PC-9 (cell line): ENCODE measurements at regions of chr2 and their contacts with region 1.

Region 1: DNA sequence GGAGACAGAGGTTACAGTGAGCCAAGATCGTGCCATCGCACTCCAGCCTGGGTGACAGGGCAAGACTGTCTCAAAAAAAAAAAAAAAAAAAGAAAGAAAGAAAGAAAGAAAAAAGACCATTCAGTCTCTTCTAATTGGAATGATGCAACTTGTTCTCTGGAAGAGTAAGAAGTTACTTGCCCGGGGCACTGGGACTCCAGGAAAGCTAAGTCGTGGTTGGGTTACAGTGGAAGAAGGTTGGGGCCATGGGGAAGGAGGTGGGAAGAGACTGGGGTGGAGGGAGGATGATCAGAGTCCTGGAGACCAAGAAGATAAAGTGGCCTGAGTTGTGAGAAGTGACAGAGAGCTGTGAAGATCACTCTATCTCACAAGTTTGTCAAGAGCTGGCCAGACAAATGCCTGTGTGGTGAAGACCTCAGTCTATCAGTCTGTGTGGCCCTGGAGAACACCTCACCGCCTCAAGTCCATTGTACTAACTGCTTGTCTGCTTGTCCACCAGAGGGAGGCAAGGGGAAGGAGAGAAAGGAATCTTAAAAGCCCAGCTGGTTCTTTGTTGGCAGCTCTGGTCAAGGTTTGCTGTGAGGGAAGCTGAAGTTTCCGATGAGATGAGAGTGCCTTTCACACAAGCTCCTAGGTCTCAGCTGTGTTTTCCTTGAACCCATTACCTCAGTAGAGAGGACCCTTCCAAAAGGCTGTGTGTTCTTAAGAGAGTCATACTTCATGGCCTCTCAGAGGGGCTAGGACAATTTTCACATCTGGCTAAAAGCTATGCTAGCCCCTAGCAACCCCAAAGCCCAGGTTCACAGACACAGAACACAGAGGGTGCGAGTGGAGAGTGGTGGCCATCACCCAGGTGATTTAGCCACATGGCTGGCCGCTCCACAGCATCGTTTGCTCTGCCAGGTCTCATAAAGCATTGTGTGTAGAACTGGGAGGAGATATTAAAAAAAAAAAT is 72.0 kb upstream of the TMEM178A start:
- DNase-seq: peak in 1 of 2 experiments; percentile 16
- H3K4me3 ChIP-seq: no peak overlapping the region
- H3K27ac ChIP-seq: no peak overlapping the region
- H3K4me1 ChIP-seq: no peaks in the 10 kb centered on the region
- H3K27me3 ChIP-seq: no peaks in the 10 kb centered on the region
- CTCF ChIP-seq: peak; percentile 63

Region 2: GRCh38 chr2:39275016-39275415 is 318.7 kb before region 1 on chr2:
- CTCF ChIA-PET with region 1: no interaction called
- POLR2A ChIA-PET with region 1: no interaction called
- intact Hi-C with region 1: no loop called
- DNase-seq: peak; percentile 6 to 38
- H3K4me3 ChIP-seq: no peak overlapping the region
- H3K27ac ChIP-seq: no peak overlapping the region
- H3K4me1 ChIP-seq: no peaks in the 10 kb centered on the region
- H3K27me3 ChIP-seq: no peaks in the 10 kb centered on the region
- CTCF ChIP-seq: no peak

Region 3: GRCh38 chr2:39696838-39697237 is 103.1 kb after region 1 on chr2:
- CTCF ChIA-PET with region 1: interaction called, 4 read pairs
- POLR2A ChIA-PET with region 1: no interaction called
- intact Hi-C with region 1: loop called (anchors 10 kb)
- DNase-seq: no peak
- H3K4me3 ChIP-seq: no peak overlapping the region
- H3K27ac ChIP-seq: no peak overlapping the region
- H3K4me1 ChIP-seq: no peaks in the 10 kb centered on the region
- H3K27me3 ChIP-seq: no peaks in the 10 kb centered on the region
- CTCF ChIP-seq: peak; percentile 62